GM18951 (cell line): ENCODE measurements at regions of chr2 and their contacts with region 1.

Region 1: GRCh38 chr2:197113275-197113711 is 186.8 kb upstream of the PGAP1 start:
- POLR2A ChIP-seq: no peak

Region 2: GRCh38 chr2:196660244-196660643 is 453.0 kb before region 1 on chr2:
- in situ Hi-C with region 1: no loop called
- POLR2A ChIP-seq: no peak

Region 3: DNA sequence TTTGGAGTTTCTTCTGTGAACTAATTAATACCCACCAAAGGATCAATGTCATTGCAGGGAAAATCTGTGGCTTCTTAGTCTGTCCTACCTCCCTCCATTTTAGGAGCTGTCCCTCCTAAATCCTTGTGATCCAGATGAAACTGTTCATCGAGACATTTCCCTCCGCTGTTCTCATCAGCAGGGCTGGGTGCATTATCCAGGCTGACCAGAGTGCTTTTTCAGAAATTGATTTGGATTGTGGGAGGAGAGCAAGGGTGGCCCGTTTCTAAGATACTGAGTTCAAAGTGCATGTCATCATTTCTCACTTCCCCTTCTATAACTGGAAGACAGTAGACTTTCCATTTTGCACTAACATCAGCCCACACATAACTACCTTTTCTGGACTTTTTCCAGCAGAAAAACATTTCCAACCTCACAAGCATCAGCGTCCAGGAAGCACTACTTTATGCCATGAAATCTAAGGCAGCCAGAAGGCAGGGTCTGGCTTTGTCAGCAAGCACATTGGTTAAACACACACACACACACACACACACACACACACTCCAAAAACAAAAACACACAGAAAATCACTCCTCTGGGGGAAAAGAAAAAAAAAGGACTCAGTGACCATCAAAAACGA is 103.2 kb after region 1 on chr2:
- in situ Hi-C with region 1: no loop called
- POLR2A ChIP-seq: peak; percentile 40

Region 4: GRCh38 chr2:197310271-197310985 is 197.1 kb after region 1 on chr2 and contains the start of gene ANKRD44:
- in situ Hi-C with region 1: loop called (anchors 25 kb)
- POLR2A ChIP-seq: peak; percentile 72

Region 5: DNA sequence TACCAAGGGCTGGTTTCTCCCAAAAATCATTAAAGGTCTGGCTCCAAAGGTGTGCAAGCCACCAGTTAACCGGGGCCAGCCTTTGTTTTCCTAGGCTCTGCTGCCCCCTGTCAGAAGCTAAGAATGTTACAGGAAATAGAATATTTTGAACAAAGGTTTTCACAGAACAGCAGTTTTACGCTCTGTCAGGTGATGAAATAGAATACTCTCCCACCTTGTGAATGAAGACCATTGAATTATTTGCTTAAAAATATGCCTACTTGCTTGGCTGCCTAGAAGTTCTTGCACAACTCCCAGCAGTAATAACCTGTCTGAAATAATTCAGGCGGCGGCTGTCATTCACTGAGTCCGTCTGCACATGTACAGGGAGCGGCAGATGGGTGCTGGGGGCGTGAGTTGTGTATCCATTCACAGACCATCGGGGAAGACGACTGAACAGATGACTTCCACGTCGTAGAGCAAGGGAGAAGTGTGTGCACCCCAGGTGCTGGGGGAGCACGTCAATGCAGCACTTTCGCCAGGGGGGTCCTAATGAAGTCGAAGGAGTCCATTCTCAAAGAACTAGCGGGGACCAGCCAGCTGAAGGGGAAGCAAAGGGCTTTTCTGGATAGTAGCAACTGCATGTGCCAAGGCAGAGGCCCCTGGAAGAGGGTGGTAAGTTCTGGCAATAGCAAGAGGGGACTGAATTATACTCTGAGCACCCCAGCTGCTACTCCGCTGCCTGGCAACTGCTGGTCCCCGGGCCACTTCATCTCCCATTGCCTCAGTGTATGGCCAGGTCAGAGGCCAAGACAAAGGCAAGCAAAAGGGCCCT is 265.4 kb after region 1 on chr2:
- in situ Hi-C with region 1: loop called (anchors 10 kb)
- POLR2A ChIP-seq: no peak